Caco-2 (cell line): ENCODE measurements at regions of chr12 and their contacts with region 1.

Region 1: DNA sequence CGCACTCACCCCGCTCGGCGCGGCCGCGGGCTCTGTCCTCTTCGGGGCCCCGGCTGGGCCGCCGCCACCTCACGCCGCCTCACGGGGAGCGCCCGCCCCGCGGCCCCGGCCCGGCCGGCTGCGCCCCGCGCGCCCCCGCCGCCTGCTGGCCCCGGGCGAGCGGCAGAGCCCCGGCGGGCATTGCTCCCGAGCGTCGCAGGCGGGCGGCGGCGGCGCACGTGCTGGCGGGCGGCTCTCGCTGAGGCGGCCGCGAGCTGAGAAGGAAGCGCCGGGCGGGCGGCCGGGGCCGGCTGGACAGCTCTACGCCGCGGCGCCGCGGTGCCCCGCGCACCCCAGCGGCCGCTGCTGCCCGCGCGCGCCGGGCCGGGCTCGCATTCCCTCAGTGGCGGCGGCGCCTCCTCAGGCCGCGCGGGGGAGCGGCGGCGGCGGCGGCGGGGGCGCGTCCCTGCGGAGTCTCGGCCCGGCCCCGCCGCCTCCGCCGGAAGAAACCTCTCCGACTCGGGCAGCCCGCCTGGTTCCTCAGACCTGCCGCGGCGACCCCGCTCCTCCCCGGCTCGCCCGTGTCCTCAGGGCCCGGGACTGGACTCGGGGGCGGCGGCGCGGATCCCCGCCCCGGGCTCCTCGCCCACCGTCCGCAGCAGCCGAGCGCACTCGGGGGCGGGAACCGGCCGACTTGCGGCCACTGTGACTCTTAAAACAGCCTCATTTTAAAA is at the start of gene PITPNM2:
- DNase-seq: peak in 1 of 2 experiments; percentile 79
- H3K4me3 ChIP-seq: peak within 1 kb of the TSS; percentile 65
- H3K4me3 Mint-ChIP-seq: peak within 1 kb of the TSS; percentile 67
- H3K27ac Mint-ChIP-seq: peak within 1 kb of the TSS; percentile 3
- H3K4me1 ChIP-seq: peaks cover 12% of the 10 kb centered on the region
- H3K4me1 Mint-ChIP-seq: peaks cover 8% of the 10 kb centered on the region
- H3K27me3 ChIP-seq: no peaks in the 10 kb centered on the region
- H3K27me3 Mint-ChIP-seq: no peaks in the 10 kb centered on the region
- CTCF ChIP-seq: no peak
- total RNA-seq, gene PITPNM2: 10.6 TPM in 2 replicates

Region 2: GRCh38 chr12:123043536-123044001 is 107.3 kb before region 1 on chr12:
- CTCF ChIA-PET with region 1: interaction called, 3 read pairs
- POLR2A ChIA-PET with region 1: interaction called, 3 read pairs
- intact Hi-C with region 1: loop called (anchors 2 kb)
- DNase-seq: peak; percentile 71 to 78
- H3K4me3 ChIP-seq: no peak overlapping the region
- H3K4me3 Mint-ChIP-seq: no peak overlapping the region
- H3K27ac Mint-ChIP-seq: no peak overlapping the region
- H3K4me1 ChIP-seq: no peaks in the 10 kb centered on the region
- H3K4me1 Mint-ChIP-seq: no peaks in the 10 kb centered on the region
- H3K27me3 ChIP-seq: no peaks in the 10 kb centered on the region
- H3K27me3 Mint-ChIP-seq: no peaks in the 10 kb centered on the region
- CTCF ChIP-seq: peak; percentile 65 to 76

Region 3: DNA sequence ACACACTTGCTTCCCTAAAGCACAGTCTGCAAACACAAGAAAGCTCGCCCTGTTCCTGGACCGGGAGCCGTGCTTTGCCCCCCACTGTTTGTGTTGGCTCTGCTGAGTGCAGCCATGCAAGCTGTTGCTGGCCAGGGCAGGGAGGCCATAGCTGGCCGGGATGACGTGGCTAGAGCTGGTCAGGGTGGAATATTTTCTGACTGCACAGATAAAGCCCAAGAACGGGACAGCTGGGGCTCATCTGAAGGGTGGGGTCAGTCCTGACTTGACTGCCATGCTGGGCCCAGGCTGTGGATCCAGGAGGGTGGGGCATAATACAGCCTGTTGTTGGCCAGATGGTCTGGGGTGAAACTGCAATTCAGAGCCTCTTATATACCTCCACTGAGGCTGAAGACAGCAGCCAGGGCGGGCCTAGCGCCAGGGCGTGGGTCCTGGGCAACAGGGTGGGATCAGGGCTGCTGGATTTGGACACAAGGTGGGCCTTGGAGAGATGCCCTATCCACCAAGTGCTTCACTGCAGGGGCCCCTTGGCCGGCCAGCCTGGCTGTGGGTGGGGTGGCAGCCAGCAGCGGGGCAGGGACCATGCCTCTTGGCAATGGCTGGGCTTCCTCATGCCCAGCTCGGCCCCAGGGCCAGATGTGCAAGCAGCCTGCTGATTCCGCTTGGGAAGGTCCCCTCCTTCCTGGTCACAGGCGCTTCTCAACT is 247.8 kb after region 1 on chr12:
- CTCF ChIA-PET with region 1: no interaction called
- POLR2A ChIA-PET with region 1: no interaction called
- intact Hi-C with region 1: no loop called
- DNase-seq: no peak
- H3K4me3 ChIP-seq: no peak overlapping the region
- H3K4me3 Mint-ChIP-seq: no peak overlapping the region
- H3K27ac Mint-ChIP-seq: no peak overlapping the region
- H3K4me1 ChIP-seq: no peaks in the 10 kb centered on the region
- H3K4me1 Mint-ChIP-seq: no peaks in the 10 kb centered on the region
- H3K27me3 ChIP-seq: no peaks in the 10 kb centered on the region
- H3K27me3 Mint-ChIP-seq: no peaks in the 10 kb centered on the region
- CTCF ChIP-seq: no peak